ENCODE measurements at regions of chr3 and their contacts with region 1.

Region 1: GRCh38 chr3:33131331-33132018 is 17.7 kb downstream of the CRTAP start:
- DNase-seq: no peak
- ATAC-seq: peak; percentile 92
- H3K4me3 ChIP-seq: no peak overlapping the region
- H3K27ac ChIP-seq: no peak overlapping the region
- H3K4me1 ChIP-seq: no peaks in the 10 kb centered on the region
- H3K27me3 ChIP-seq: no peaks in the 10 kb centered on the region
- CTCF ChIP-seq: peak; percentile 55 to 85 (median 72)
- EP300 ChIP-seq: no peak
- POLR2A ChIP-seq: no peak
- RAD21 ChIP-seq: peak; percentile 93

Region 2: DNA sequence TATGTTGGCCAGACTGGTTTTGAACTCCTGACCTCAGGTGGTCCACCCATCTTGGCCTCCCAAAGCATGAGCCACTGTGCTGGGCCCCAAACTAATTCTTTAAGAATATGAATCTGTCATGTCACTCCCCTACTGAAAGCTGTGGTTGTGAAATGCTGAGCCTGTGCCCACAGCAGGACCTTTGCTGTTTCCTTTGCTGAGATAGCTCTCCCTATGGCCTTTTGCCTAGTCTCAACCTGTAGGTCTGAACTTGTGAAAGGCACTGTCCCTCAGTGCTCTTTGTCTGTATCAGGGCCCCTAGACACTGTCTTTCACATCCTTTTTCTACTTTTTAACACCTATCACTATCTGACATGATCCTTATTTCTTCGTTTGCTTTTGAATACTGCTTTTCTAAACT is 242.7 kb before region 1 on chr3:
- CTCF ChIA-PET with region 1: no interaction called
- POLR2A ChIA-PET with region 1: no interaction called
- RAD21 ChIA-PET with region 1: no interaction called
- SMC1A ChIA-PET with region 1: no interaction called
- in situ Hi-C with region 1: no loop called
- intact Hi-C with region 1: no loop called
- DNase-seq: peak; percentile 72
- ATAC-seq: peak; percentile 94
- H3K4me3 ChIP-seq: no peak overlapping the region
- H3K27ac ChIP-seq: no peak overlapping the region
- H3K4me1 ChIP-seq: peaks cover 18% of the 10 kb centered on the region
- H3K27me3 ChIP-seq: no peaks in the 10 kb centered on the region
- CTCF ChIP-seq: no peak
- EP300 ChIP-seq: peak; percentile 15 to 18; a peak in 1 of 4 replicates
- POLR2A ChIP-seq: no peak
- RAD21 ChIP-seq: no peak

Region 3: GRCh38 chr3:33023172-33024136 is 108.0 kb before region 1 on chr3:
- CTCF ChIA-PET with region 1: no interaction called
- POLR2A ChIA-PET with region 1: no interaction called
- RAD21 ChIA-PET with region 1: no interaction called
- SMC1A ChIA-PET with region 1: no interaction called
- in situ Hi-C with region 1: no loop called
- intact Hi-C with region 1: no loop called
- DNase-seq: no peak
- ATAC-seq: no peak
- H3K4me3 ChIP-seq: no peak overlapping the region
- H3K27ac ChIP-seq: no peak overlapping the region
- H3K4me1 ChIP-seq: peaks cover 4% of the 10 kb centered on the region; the same call in 1 of the 2 replicates
- H3K27me3 ChIP-seq: no peaks in the 10 kb centered on the region
- CTCF ChIP-seq: no peak
- EP300 ChIP-seq: no peak
- POLR2A ChIP-seq: no peak
- RAD21 ChIP-seq: no peak

Region 4: DNA sequence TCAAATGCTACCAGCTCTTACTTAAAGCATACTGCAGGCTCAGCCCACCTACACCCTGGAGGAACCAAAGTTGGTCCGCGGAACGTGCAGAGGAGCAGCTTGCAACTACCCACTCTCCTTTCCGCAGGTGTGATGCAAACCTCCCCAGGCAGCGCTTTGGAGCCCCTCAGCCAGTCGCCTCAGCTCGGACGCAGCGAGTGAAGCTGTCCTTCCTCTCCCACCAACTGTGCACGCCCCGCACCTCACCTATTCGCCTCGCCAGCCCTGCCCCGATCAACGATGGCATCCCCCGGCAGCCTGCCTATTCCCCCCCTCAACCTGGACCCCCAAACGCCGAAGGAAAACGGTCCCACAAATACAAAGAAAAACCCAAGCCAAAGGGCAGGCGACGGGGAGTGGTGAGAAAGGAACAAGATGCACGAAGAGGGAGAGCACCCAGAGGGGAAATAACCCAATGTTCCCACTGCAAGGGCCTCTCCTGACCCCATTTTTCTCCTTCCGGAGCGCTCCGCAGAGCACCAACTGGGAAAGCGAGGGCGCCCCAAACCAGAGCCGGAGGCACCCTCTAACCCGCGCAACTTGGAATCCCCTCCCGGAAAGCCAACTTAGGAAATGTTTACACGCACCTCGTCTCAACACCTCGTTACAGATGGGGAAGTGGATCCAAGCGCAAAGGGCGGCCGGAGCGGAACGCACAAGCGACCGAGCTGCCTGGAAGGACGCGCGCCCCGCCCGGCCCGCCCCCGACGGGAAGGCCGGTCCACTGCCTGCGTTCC is 35.2 kb before region 1 on chr3:
- CTCF ChIA-PET with region 1: interaction called, 11 read pairs
- POLR2A ChIA-PET with region 1: no interaction called
- RAD21 ChIA-PET with region 1: interaction called, 3 read pairs
- SMC1A ChIA-PET with region 1: interaction called, 4 read pairs
- in situ Hi-C with region 1: no loop called
- intact Hi-C with region 1: no loop called
- DNase-seq: no peak
- ATAC-seq: peak; percentile 77
- H3K4me3 ChIP-seq: peak overlapping the region; percentile 96
- H3K27ac ChIP-seq: peak overlapping the region; percentile 90
- H3K4me1 ChIP-seq: no peaks in the 10 kb centered on the region
- H3K27me3 ChIP-seq: no peaks in the 10 kb centered on the region
- CTCF ChIP-seq: no peak
- EP300 ChIP-seq: no peak
- POLR2A ChIP-seq: no peak; the same call in 1 of the 2 replicates
- RAD21 ChIP-seq: no peak

Region 5: DNA sequence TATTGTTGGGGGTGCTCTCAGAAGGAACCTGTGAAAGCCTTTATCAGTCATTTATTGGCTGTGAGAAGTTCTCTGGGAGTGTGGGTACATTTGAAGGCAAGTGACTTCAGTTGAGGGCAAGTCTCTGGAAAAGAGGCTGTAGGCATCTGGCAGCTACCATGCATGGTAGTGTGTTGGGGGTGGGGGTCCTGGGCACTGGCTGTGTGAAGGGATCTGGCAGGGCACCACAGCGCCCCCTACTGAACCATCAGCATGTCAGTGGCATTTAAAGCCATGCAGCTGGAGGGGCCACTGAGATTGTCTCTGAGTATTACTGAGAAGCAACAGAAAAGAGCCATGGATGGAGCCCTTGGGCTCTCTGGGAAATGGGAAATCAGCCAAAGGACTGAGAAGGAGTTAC is 13.0 kb after region 1 on chr3:
- CTCF ChIA-PET with region 1: interaction called, 136 read pairs
- POLR2A ChIA-PET with region 1: interaction called, 4 read pairs
- RAD21 ChIA-PET with region 1: interaction called, 11 read pairs
- SMC1A ChIA-PET with region 1: interaction called, 16 read pairs
- in situ Hi-C with region 1: no loop called
- intact Hi-C with region 1: no loop called
- DNase-seq: no peak
- ATAC-seq: peak; percentile 73
- H3K4me3 ChIP-seq: no peak overlapping the region
- H3K27ac ChIP-seq: no peak overlapping the region
- H3K4me1 ChIP-seq: peaks cover 4% of the 10 kb centered on the region; the same call in 1 of the 2 replicates
- H3K27me3 ChIP-seq: no peaks in the 10 kb centered on the region
- CTCF ChIP-seq: peak; percentile 37 to 59 (median 55)
- EP300 ChIP-seq: no peak
- POLR2A ChIP-seq: no peak
- RAD21 ChIP-seq: peak; percentile 27; the same call in 1 of the 2 replicates

Region 6: GRCh38 chr3:33260104-33260503 is 128.6 kb after region 1 on chr3:
- CTCF ChIA-PET with region 1: no interaction called
- POLR2A ChIA-PET with region 1: no interaction called
- RAD21 ChIA-PET with region 1: no interaction called
- SMC1A ChIA-PET with region 1: no interaction called
- in situ Hi-C with region 1: no loop called
- intact Hi-C with region 1: no loop called
- DNase-seq: no peak
- ATAC-seq: no peak
- H3K4me3 ChIP-seq: no peak overlapping the region
- H3K27ac ChIP-seq: no peak overlapping the region
- H3K4me1 ChIP-seq: no peaks in the 10 kb centered on the region
- H3K27me3 ChIP-seq: no peaks in the 10 kb centered on the region
- CTCF ChIP-seq: no peak
- EP300 ChIP-seq: no peak
- POLR2A ChIP-seq: no peak
- RAD21 ChIP-seq: no peak

Region 7: DNA sequence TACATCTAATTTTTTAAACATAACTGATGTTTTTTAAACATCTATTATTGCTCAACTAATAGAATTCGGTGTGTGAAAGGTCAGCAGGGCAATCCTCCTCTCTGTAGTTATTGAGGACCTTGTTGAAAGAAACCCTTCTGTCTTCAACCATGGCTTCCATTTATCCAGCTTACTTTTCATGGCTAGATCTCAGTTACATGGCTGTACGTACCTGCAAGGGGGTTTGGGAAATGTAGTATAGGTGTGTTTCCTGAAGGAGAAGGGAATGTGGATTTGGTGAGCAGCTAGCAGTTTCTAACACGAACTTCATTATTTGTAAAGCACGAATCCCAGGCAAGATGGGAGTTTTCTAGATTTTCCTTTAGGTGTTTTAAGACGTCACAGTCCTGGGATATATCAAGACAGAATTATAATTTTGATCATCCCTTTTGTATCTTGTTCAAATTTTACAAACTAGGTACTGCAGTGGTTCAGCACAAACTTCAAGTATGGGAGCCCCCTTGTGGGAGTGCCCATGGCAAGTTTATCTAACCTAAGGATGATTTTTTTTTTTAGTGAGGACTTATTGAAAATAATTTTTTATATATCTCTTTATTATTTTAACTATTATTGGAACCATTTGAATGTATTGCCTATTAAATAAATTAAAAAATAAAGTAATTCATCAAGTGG is 187.4 kb after region 1 on chr3:
- CTCF ChIA-PET with region 1: interaction called, 13 read pairs
- POLR2A ChIA-PET with region 1: no interaction called
- RAD21 ChIA-PET with region 1: interaction called, 3 read pairs
- SMC1A ChIA-PET with region 1: interaction called, 7 read pairs
- in situ Hi-C with region 1: no loop called
- intact Hi-C with region 1: loop called (anchors 5 kb)
- DNase-seq: no peak
- ATAC-seq: peak; percentile 31; the same call in 2 of the 3 replicates
- H3K4me3 ChIP-seq: no peak overlapping the region
- H3K27ac ChIP-seq: no peak overlapping the region
- H3K4me1 ChIP-seq: no peaks in the 10 kb centered on the region
- H3K27me3 ChIP-seq: no peaks in the 10 kb centered on the region
- CTCF ChIP-seq: peak in 1 of 3 experiments; percentile 14; a peak in 2 of 6 replicates
- EP300 ChIP-seq: no peak
- POLR2A ChIP-seq: no peak
- RAD21 ChIP-seq: 0 out of 2 replicates have a peak, but pooled peaks have one; percentile 7

Region 8: GRCh38 chr3:33717866-33718594 is 586.6 kb after region 1 on chr3 and contains the start of gene CLASP2:
- CTCF ChIA-PET with region 1: interaction called, 4 read pairs
- POLR2A ChIA-PET with region 1: no interaction called
- RAD21 ChIA-PET with region 1: interaction called, 6 read pairs
- SMC1A ChIA-PET with region 1: interaction called, 10 read pairs
- in situ Hi-C with region 1: no loop called
- intact Hi-C with region 1: no loop called
- DNase-seq: peak; percentile 42
- ATAC-seq: peak; percentile 91
- H3K4me3 ChIP-seq: peak within 1 kb of the TSS; percentile 77
- H3K27ac ChIP-seq: peak within 1 kb of the TSS; percentile 82
- H3K4me1 ChIP-seq: no peaks in the 10 kb centered on the region
- H3K27me3 ChIP-seq: no peaks in the 10 kb centered on the region
- CTCF ChIP-seq: no peak
- EP300 ChIP-seq: no peak
- POLR2A ChIP-seq: peak; percentile 89
- RAD21 ChIP-seq: no peak
- polyA plus RNA-seq, gene CLASP2: 4.0 to 5.3 TPM

Measured in GM12878 (cell line).